Activated CD4-positive, alpha-beta T cell treated with anti-CD3 and anti-CD28 coated beads for 36 hours (primary cell): ENCODE measurements at regions of chr22 and their contacts with region 1.

Region 1: DNA sequence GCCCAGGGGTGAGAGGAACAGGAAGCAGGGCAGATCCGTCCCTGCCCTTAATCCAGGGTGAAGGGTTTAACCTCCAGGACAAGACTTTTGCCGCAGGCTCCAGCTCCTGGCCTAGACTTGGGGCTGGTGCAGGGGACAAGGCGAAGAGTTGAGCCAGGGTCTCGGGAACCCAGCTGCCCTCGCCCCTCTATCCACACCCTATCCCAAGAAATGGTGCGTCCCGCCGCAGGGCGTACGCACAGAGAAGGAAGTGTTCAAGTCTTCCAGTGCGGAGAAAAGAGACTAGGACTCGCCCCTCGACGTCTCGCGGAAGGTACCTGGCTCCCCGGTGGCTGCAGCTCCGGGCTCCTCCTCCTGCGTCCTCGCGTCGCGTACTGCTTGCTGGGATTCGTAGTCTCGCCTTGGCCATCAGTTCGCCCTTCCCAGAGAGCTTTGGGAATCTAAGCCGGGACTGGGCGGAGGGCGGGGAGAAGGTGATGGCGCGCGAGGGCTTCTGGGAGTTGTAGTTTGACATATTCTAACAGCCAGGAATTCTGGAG is at the start of gene ZMAT5:
- DNase-seq: peak; percentile 96
- ATAC-seq: peak; percentile 97
- H3K4me3 Mint-ChIP-seq: peak within 1 kb of the TSS; percentile 99
- H3K27ac Mint-ChIP-seq: peak within 1 kb of the TSS; percentile 98
- H3K4me1 Mint-ChIP-seq: peaks cover 31% of the 10 kb centered on the region
- H3K27me3 Mint-ChIP-seq: no peaks in the 10 kb centered on the region
- total RNA-seq, gene ZMAT5: 19.2 to 25.1 TPM

Region 2: GRCh38 chr22:28741758-28742561 is 1024.7 kb before region 1 on chr22 and contains the starts of genes CHEK2 and HSCB:
- CTCF ChIA-PET with region 1: no interaction called
- POLR2A ChIA-PET with region 1: no interaction called
- intact Hi-C with region 1: loop called in 1 of 2 experiments (anchors 5 kb)
- DNase-seq: peak; percentile 99
- ATAC-seq: peak; percentile 93
- H3K4me3 Mint-ChIP-seq: peak within 1 kb of the TSS; percentile 81
- H3K27ac Mint-ChIP-seq: peak within 1 kb of the TSS; percentile 83
- H3K4me1 Mint-ChIP-seq: peaks cover 32% of the 10 kb centered on the region
- H3K27me3 Mint-ChIP-seq: no peaks in the 10 kb centered on the region
- total RNA-seq, gene CHEK2: 37.5 to 41.3 TPM
- total RNA-seq, gene HSCB: 16.5 to 18.5 TPM

Region 3: DNA sequence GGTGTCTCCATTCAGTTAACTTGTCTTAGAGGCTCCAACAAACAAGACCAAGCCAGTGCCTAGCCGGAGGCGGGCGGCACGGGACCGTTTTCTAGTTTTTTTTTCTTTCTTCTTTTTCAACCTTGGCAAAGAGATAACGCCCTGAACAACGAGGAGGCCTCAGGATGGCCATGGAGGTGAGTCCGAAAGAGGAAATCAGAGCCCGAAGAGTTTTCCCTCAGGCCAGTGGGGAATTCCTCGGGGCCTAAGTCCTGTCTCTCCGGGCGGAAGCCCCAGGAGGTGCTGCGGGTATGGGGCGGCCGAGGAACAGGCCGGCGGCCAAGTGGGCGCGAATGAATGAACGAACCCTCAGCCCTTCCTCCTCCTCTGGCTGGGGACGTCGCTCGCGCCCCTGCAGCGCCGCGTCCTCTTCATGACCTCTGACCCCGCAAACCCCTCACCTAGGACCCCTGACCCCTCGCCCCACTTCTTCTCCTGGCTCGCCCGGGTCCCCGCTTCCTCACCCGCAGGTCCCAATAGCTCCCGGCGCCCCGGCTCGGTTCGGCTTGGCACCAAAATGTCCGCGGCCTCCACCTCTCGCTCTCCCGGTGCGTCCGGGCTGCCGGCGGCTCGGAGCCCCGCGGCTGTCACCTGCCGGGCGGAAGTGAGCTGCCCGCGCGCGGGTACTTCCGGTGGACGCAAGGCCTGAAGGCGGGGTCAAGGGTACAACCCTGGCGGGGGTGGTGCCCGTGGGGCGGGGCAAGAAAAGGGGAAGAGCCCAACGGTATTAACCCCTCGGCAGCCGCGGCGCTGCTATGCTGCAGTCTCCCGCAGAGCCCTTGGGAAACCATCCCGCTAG is 378.6 kb before region 1 on chr22 and contains the start of gene AP1B1:
- CTCF ChIA-PET with region 1: no interaction called
- POLR2A ChIA-PET with region 1: no interaction called
- intact Hi-C with region 1: loop called (anchors 1 kb)
- DNase-seq: peak; percentile 97
- ATAC-seq: peak; percentile 99
- H3K4me3 Mint-ChIP-seq: peak within 1 kb of the TSS; percentile 87
- H3K27ac Mint-ChIP-seq: peak within 1 kb of the TSS; percentile 83
- H3K4me1 Mint-ChIP-seq: peaks cover 30% of the 10 kb centered on the region
- H3K27me3 Mint-ChIP-seq: no peaks in the 10 kb centered on the region
- total RNA-seq, gene AP1B1: 56.6 to 59.9 TPM

Region 4: GRCh38 chr22:29574762-29575450 is 191.8 kb before region 1 on chr22:
- CTCF ChIA-PET with region 1: no interaction called
- POLR2A ChIA-PET with region 1: no interaction called
- intact Hi-C with region 1: no loop called
- DNase-seq: no peak
- ATAC-seq: no peak
- H3K4me3 Mint-ChIP-seq: no peak overlapping the region
- H3K27ac Mint-ChIP-seq: no peak overlapping the region
- H3K4me1 Mint-ChIP-seq: peaks cover 1% of the 10 kb centered on the region
- H3K27me3 Mint-ChIP-seq: no peaks in the 10 kb centered on the region

Region 5: GRCh38 chr22:29603358-29604075 is 163.2 kb before region 1 on chr22 and contains the start of gene NF2:
- CTCF ChIA-PET with region 1: no interaction called
- POLR2A ChIA-PET with region 1: no interaction called
- intact Hi-C with region 1: loop called in 1 of 2 experiments (anchors 1 kb)
- DNase-seq: peak; percentile 99
- ATAC-seq: peak; percentile 97
- H3K4me3 Mint-ChIP-seq: peak within 1 kb of the TSS; percentile 92
- H3K27ac Mint-ChIP-seq: peak within 1 kb of the TSS; percentile 97
- H3K4me1 Mint-ChIP-seq: peaks cover 29% of the 10 kb centered on the region
- H3K27me3 Mint-ChIP-seq: no peaks in the 10 kb centered on the region
- total RNA-seq, gene NF2: 40.2 to 43.1 TPM

Region 6: DNA sequence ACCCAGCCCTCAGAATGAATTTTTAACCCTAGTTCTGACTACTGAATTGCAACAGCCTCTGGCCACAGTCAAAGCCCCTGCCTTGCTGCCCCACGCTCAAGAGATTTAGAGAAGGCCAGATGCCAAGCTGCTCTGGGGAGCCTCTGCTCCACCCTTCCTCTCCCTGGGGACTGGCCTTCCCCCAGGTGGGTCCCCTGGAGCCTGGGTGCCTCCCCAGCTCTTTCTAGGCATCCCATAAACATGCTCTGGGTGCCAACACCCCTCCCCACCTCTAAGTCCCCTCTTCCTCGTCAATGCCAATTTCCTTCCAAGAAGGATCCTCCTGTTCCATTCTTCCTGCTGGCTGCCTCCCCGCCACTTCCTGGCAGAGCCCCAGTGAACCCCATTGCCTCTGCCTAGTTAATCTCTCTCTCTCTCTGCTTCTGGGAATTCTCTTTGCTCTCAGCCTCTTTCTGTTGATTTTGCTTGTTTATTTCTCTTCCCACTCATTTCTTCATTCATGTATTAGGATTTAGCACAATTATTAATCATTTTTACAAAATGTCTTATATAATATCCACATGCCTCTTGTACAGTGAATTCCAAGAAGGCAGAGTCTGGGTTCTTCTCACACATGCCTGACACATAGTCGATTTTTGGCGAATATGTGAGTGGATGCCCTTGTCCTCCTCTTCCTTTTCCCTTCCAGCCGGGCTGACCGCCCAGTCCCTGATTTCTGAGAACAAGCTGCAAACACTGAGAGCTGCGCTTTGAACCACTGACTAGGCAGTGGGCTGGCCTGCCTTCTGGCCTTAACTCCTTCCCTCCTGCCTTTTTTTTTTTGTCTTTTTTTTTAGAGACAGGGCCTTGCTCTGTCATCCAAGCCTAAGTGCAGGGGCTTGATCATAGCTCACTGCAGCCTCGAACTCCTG is 18.0 kb after region 1 on chr22:
- CTCF ChIA-PET with region 1: no interaction called
- POLR2A ChIA-PET with region 1: no interaction called
- intact Hi-C with region 1: no loop called
- DNase-seq: no peak
- ATAC-seq: no peak
- H3K4me3 Mint-ChIP-seq: no peak overlapping the region
- H3K27ac Mint-ChIP-seq: no peak overlapping the region
- H3K4me1 Mint-ChIP-seq: no peaks in the 10 kb centered on the region
- H3K27me3 Mint-ChIP-seq: no peaks in the 10 kb centered on the region

Region 7: GRCh38 chr22:29883045-29883774 is 116.5 kb after region 1 on chr22 and contains the start of gene MTMR3:
- CTCF ChIA-PET with region 1: no interaction called
- POLR2A ChIA-PET with region 1: no interaction called
- intact Hi-C with region 1: loop called (anchors 1 to 5 kb)
- DNase-seq: peak; percentile 95
- ATAC-seq: peak; percentile 83
- H3K4me3 Mint-ChIP-seq: peak within 1 kb of the TSS; percentile 89
- H3K27ac Mint-ChIP-seq: peak within 1 kb of the TSS; percentile 84
- H3K4me1 Mint-ChIP-seq: peaks cover 6% of the 10 kb centered on the region
- H3K27me3 Mint-ChIP-seq: no peaks in the 10 kb centered on the region
- total RNA-seq, gene MTMR3: 19.2 to 22.8 TPM

Region 8: DNA sequence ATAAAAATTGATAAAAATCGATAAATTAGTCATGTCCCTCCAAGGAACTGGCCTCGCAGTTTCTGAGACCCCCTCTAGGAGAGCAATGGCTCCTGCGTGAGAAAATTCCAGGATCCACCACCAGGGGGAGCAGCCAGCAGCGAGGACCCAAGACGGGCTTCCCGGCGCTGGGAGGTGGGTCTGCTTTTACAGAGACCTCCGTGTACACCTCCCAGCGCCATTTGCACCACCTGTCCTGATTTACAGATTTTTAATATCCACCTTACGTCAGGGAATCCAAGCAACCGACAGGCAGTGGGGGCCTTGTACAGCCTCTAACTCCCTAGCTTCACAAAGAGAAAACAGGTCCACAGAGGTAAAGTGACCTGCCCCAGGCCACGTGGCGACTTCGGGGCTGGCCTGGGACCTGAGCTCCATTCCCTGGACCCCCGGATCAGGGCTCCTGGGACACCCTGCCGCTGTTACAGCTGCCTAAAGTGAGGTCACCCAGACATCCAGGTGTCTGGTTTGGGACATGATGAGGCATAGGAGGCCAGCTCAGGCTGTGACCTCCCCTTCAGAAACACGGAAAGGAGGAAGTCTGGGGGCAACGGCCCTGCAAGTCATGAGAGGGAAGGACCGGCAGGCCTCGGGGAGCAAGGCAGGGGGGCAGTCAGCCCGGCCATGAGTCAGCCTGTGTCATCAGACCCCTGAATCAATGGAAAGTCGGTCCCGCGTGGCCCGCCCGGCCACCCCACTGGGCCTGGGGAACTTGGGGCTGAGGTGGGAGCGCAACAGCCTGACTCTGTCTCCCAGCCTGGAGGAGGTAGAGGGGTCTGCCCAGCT is 496.4 kb after region 1 on chr22:
- CTCF ChIA-PET with region 1: no interaction called
- POLR2A ChIA-PET with region 1: no interaction called
- intact Hi-C with region 1: loop called in 1 of 2 experiments (anchors 10 kb)
- DNase-seq: peak; percentile 88
- ATAC-seq: no peak
- H3K4me3 Mint-ChIP-seq: peak overlapping the region; percentile 62
- H3K27ac Mint-ChIP-seq: peak overlapping the region; percentile 51
- H3K4me1 Mint-ChIP-seq: peaks cover 33% of the 10 kb centered on the region
- H3K27me3 Mint-ChIP-seq: no peaks in the 10 kb centered on the region

Region 9: GRCh38 chr22:30968924-30969539 is 1202.3 kb after region 1 on chr22 and contains the start of gene TUG1:
- CTCF ChIA-PET with region 1: no interaction called
- POLR2A ChIA-PET with region 1: no interaction called
- intact Hi-C with region 1: loop called in 1 of 2 experiments (anchors 2 kb)
- DNase-seq: peak; percentile 99
- ATAC-seq: peak; percentile 93
- H3K4me3 Mint-ChIP-seq: peak within 1 kb of the TSS; percentile 90
- H3K27ac Mint-ChIP-seq: peak within 1 kb of the TSS; percentile 95
- H3K4me1 Mint-ChIP-seq: peaks cover 51% of the 10 kb centered on the region
- H3K27me3 Mint-ChIP-seq: no peaks in the 10 kb centered on the region
- total RNA-seq, gene TUG1: 46.8 to 56.4 TPM